ENCODE measurements at regions of chr7 and their contacts with region 1.

Region 1: GRCh38 chr7:139915864-139916716 is 87.0 kb downstream of the TBXAS1 start:
- DNase-seq: peak; percentile 98
- ATAC-seq: peak; percentile 83
- H3K4me3 ChIP-seq: no peak overlapping the region
- H3K27ac ChIP-seq: peak overlapping the region; percentile 96
- H3K4me1 ChIP-seq: peaks cover 42% of the 10 kb centered on the region
- H3K27me3 ChIP-seq: no peaks in the 10 kb centered on the region
- CTCF ChIP-seq: no peak

Region 2: GRCh38 chr7:139950848-139951512 is 34.9 kb after region 1 on chr7:
- CTCF ChIA-PET with region 1: no interaction called
- POLR2A ChIA-PET with region 1: no interaction called
- intact Hi-C with region 1: loop called (anchors 1 kb)
- DNase-seq: peak; percentile 77
- ATAC-seq: peak; percentile 91
- H3K4me3 ChIP-seq: no peak overlapping the region
- H3K27ac ChIP-seq: peak overlapping the region; percentile 79
- H3K4me1 ChIP-seq: peaks cover 12% of the 10 kb centered on the region
- H3K27me3 ChIP-seq: no peaks in the 10 kb centered on the region
- CTCF ChIP-seq: no peak

Measured in PC-3 (cell line).